Naive thymus-derived CD4-positive, alpha-beta T cell (primary cell): ENCODE measurements at regions of chr17 and their contacts with region 1.

Region 1: GRCh38 chr17:50872710-50873424 is 6.7 kb upstream of the TOB1 start:
- DNase-seq: peak in 8 of 9 donors; percentile 38 to 68 (median 45)
- ATAC-seq: peak; percentile 78
- H3K4me3 ChIP-seq: no peak overlapping the region
- H3K4me3 Mint-ChIP-seq: peak overlapping the region in 8 of 10 donors; percentile 25 to 73 (median 56)
- H3K27ac ChIP-seq: peak overlapping the region; percentile 3
- H3K27ac Mint-ChIP-seq: peak overlapping the region in 7 of 9 donors; percentile 2 to 81 (median 69)
- H3K4me1 ChIP-seq: peaks cover 28 to 51% of the 10 kb centered on the region in 2 donors
- H3K4me1 Mint-ChIP-seq: peaks cover 25 to 63% (median 49%) of the 10 kb centered on the region in 7 donors
- H3K27me3 ChIP-seq: peaks cover 0 to 6% of the 10 kb centered on the region in 2 donors
- H3K27me3 Mint-ChIP-seq: peaks cover 0 to 28% (median 0%) of the 10 kb centered on the region in 5 donors

Region 2: DNA sequence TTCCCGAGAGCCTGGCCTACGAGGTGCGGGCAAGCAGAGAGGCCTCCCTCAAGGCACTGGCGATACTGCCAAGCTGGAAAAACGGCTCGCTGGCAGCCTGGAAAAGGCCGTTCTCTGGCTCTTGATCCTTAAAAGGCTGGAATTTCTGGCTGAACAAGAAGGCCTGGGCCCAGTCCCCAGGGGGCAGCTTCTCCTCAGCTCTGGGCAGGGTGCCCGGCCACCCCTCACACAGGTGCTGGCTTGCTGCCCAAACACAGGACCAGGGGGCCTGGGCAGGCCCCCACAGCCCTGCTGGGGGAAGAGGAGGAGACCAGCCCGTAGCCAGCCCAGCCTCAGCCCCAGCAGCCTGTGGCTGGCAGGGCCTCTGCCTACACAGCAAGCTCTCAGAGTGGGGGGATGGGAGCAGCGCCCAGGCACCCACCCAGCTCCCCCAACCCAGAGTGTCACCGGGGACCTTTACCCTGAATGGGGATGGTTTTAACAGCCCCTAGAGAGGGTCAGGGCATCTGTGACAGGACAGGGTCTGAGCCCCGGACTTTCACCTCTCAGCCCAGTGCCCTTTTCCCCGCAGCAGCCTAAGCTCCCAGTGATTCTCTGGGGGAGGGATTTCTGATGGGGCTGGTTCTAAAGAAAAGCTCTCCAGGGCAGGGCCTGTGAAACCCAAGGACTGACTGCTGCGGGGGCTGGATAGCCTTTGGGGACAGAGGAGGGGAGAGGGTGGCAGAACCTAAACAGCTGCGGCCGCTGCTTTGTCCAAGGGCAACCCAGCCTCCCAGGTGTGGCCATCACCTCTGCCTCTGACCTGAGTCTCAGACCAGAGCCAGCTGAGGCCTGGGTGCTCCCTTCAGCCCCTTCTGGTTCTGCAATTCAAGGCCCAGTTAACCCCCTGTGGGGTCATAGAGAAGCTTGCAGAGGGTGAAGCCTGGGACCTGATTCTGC is 31.9 kb after region 1 on chr17:
- CTCF ChIA-PET with region 1: interaction called, 3 read pairs
- POLR2A ChIA-PET with region 1: interaction called, 828 read pairs
- intact Hi-C with region 1: no loop called
- DNase-seq: no peak
- ATAC-seq: no peak
- H3K4me3 ChIP-seq: no peak overlapping the region
- H3K4me3 Mint-ChIP-seq: no peak overlapping the region
- H3K27ac ChIP-seq: no peak overlapping the region
- H3K27ac Mint-ChIP-seq: no peak overlapping the region
- H3K4me1 ChIP-seq: peaks cover 31 to 47% of the 10 kb centered on the region in 2 donors
- H3K4me1 Mint-ChIP-seq: peaks cover 40 to 68% (median 64%) of the 10 kb centered on the region in 7 donors
- H3K27me3 ChIP-seq: no peaks in the 10 kb centered on the region
- H3K27me3 Mint-ChIP-seq: peaks cover 0 to 2% (median 0%) of the 10 kb centered on the region in 5 donors

Region 3: DNA sequence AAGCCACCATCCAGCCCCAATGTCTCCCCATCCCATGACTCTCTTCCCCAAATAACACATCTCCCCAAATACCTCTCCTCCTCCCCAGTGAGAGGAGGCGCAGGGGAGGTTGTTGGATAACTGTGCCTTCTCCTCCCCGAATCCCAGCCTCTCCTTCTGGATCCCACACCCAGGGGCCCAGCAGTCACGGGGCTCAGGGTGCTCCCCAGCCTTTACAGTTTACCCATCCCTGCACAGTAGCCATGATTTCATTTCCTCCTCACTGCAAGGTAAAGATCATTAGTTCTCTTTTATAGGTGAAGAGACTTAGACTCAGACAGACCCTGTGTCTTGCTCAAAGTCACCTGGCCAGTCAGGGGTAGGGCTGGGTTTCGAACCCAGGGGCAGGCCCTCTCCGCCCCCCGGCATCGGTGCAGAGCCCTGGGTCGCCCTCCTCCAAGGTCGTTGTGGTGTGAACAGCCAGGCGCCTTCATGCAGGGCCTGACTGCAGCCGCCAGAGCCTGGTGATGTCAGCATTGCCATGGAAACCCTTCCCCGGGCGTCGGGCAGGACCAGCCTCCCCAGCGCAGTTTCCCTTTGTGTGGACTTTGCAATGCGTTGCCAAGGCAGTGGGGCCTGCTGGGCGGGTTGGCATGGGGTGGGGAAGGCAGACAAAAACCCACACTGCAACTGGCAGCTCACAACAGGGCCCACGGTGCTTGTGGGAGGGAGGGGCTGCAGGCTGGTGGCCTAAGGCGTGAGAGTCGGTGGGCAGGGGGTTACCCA is 46.6 kb after region 1 on chr17:
- CTCF ChIA-PET with region 1: interaction called, 3 read pairs
- POLR2A ChIA-PET with region 1: interaction called, 828 read pairs
- intact Hi-C with region 1: no loop called
- DNase-seq: peak; percentile 67 to 91 (median 83)
- ATAC-seq: peak; percentile 95
- H3K4me3 ChIP-seq: no peak overlapping the region
- H3K4me3 Mint-ChIP-seq: peak overlapping the region; percentile 36 to 86 (median 75)
- H3K27ac ChIP-seq: peak overlapping the region; percentile 76
- H3K27ac Mint-ChIP-seq: peak overlapping the region; percentile 89 to 98 (median 97)
- H3K4me1 ChIP-seq: peaks cover 22 to 44% of the 10 kb centered on the region in 2 donors
- H3K4me1 Mint-ChIP-seq: peaks cover 19 to 56% (median 43%) of the 10 kb centered on the region in 7 donors
- H3K27me3 ChIP-seq: no peaks in the 10 kb centered on the region
- H3K27me3 Mint-ChIP-seq: peaks cover 0 to 9% (median 0%) of the 10 kb centered on the region in 5 donors

Region 4: DNA sequence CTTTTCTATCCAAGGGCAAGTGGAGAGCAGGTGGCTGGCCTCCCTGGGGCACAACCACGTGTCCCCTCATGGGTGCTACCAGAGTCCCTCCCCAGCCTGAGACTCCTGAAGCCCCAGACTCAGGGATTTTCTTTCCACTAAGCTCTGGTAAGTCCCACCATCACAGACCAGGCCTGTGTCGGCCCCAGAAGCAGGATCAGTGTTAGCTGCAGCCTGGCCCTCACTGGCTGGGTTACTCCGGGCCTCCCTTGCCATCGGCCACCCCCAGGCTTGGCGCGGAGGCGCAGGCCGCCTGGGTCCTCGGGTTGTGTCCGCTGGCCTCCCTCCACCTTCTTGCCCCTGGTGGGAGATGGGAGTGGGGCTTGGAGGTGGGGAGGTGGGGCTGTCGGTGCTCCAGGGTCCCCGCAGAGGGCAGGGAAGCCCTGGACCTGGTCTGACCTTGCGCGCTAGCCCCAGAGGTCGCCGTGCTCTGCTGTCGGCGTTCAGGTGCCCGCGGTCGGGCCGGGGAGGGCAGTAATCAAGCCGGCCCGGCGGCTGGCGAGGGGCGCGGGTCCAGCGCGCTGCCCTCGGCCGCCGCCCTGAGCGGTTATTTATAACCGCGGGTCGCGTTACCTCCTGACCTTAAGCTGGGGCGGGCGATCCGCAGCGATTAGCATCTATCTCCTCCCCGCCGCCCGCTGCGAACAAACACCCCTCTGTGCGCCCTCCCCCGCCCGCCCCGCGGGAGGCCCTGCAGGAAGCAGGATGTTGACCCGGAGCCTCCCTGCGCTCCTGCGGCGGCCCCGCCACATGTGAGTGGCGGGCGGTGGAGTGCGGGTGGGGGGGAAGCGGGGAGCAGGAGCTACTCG is 71.4 kb after region 1 on chr17:
- CTCF ChIA-PET with region 1: interaction called, 33 read pairs
- POLR2A ChIA-PET with region 1: interaction called, 664 read pairs
- intact Hi-C with region 1: no loop called
- DNase-seq: peak; percentile 56 to 79 (median 73)
- ATAC-seq: peak; percentile 91
- H3K4me3 ChIP-seq: peak overlapping the region; percentile 73
- H3K4me3 Mint-ChIP-seq: peak overlapping the region; percentile 73 to 90 (median 85)
- H3K27ac ChIP-seq: peak overlapping the region; percentile 88
- H3K27ac Mint-ChIP-seq: peak overlapping the region; percentile 78 to 95 (median 94)
- H3K4me1 ChIP-seq: peaks cover 17 to 33% of the 10 kb centered on the region in 2 donors
- H3K4me1 Mint-ChIP-seq: peaks cover 25 to 61% (median 35%) of the 10 kb centered on the region in 7 donors
- H3K27me3 ChIP-seq: no peaks in the 10 kb centered on the region
- H3K27me3 Mint-ChIP-seq: no peaks in the 10 kb centered on the region

Region 5: GRCh38 chr17:51085185-51085805 is 212.4 kb after region 1 on chr17:
- CTCF ChIA-PET with region 1: no interaction called
- POLR2A ChIA-PET with region 1: no interaction called
- intact Hi-C with region 1: no loop called
- DNase-seq: no peak
- ATAC-seq: no peak
- H3K4me3 ChIP-seq: no peak overlapping the region
- H3K4me3 Mint-ChIP-seq: no peak overlapping the region
- H3K27ac ChIP-seq: no peak overlapping the region
- H3K27ac Mint-ChIP-seq: no peak overlapping the region
- H3K4me1 ChIP-seq: no peaks in the 10 kb centered on the region
- H3K4me1 Mint-ChIP-seq: peaks cover 7 to 37% (median 24%) of the 10 kb centered on the region in 7 donors
- H3K27me3 ChIP-seq: no peaks in the 10 kb centered on the region
- H3K27me3 Mint-ChIP-seq: no peaks in the 10 kb centered on the region